T-cell (primary cell): ENCODE measurements at regions of chr6 and their contacts with region 1.

Region 1: GRCh38 chr6:53568776-53569616 is 24.1 kb upstream of the GCLC start:
- DNase-seq: no peak
- ATAC-seq: no peak
- H3K4me3 ChIP-seq: no peak overlapping the region
- H3K4me3 Mint-ChIP-seq: no peak overlapping the region
- H3K27ac ChIP-seq: no peak overlapping the region
- H3K27ac Mint-ChIP-seq: no peak overlapping the region
- H3K4me1 ChIP-seq: no peaks in the 10 kb centered on the region
- H3K4me1 Mint-ChIP-seq: no peaks in the 10 kb centered on the region
- H3K27me3 ChIP-seq: no peaks in the 10 kb centered on the region
- H3K27me3 Mint-ChIP-seq: peaks cover 4 to 22% of the 10 kb centered on the region in 2 donors

Region 2: GRCh38 chr6:52371656-52372191 is 1197.3 kb before region 1 on chr6:
- CTCF ChIA-PET with region 1: no interaction called
- POLR2A ChIA-PET with region 1: no interaction called
- DNase-seq: no peak
- ATAC-seq: no peak
- H3K4me3 ChIP-seq: no peak overlapping the region
- H3K4me3 Mint-ChIP-seq: no peak overlapping the region
- H3K27ac ChIP-seq: no peak overlapping the region
- H3K27ac Mint-ChIP-seq: peak overlapping the region; percentile 68 to 79
- H3K4me1 ChIP-seq: peaks cover 10 to 19% of the 10 kb centered on the region in 2 experiments
- H3K4me1 Mint-ChIP-seq: peaks cover 88 to 91% (median 89%) of the 10 kb centered on the region in 3 donors
- H3K27me3 ChIP-seq: no peaks in the 10 kb centered on the region
- H3K27me3 Mint-ChIP-seq: no peaks in the 10 kb centered on the region

Region 3: GRCh38 chr6:53581173-53581773 is 12.3 kb after region 1 on chr6:
- CTCF ChIA-PET with region 1: interaction called in 1 of 2 experiments, 12 read pairs
- POLR2A ChIA-PET with region 1: no interaction called
- DNase-seq: no peak
- ATAC-seq: no peak
- H3K4me3 ChIP-seq: no peak overlapping the region
- H3K4me3 Mint-ChIP-seq: no peak overlapping the region
- H3K27ac ChIP-seq: no peak overlapping the region
- H3K27ac Mint-ChIP-seq: no peak overlapping the region
- H3K4me1 ChIP-seq: no peaks in the 10 kb centered on the region
- H3K4me1 Mint-ChIP-seq: no peaks in the 10 kb centered on the region
- H3K27me3 ChIP-seq: no peaks in the 10 kb centered on the region
- H3K27me3 Mint-ChIP-seq: no peaks in the 10 kb centered on the region

Region 4: DNA sequence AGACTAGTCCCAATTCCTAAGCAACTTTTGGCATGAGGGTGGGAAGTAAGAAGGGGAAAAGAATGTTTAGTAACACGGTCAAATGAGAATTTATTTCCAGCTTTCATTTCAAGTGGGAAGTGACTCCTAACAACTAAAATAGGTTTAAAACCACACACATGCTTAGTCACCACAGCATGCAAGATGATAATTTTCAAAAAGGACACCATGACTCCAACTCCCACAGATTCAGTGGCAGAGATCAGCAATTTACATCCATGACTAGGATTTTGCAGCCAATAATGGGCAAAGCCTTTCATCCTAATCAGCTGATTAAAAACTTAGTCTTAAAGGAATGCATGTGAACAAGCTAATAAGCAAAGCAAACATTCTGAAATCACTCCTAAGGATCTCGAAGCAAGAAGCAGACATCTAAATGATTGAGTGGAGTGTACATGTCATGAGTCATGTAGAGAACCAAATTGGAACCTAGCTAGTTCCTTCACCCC is 24.0 kb after region 1 on chr6:
- CTCF ChIA-PET with region 1: no interaction called
- POLR2A ChIA-PET with region 1: no interaction called
- DNase-seq: no peak
- ATAC-seq: no peak
- H3K4me3 ChIP-seq: no peak overlapping the region
- H3K4me3 Mint-ChIP-seq: no peak overlapping the region
- H3K27ac ChIP-seq: no peak overlapping the region
- H3K27ac Mint-ChIP-seq: no peak overlapping the region
- H3K4me1 ChIP-seq: no peaks in the 10 kb centered on the region
- H3K4me1 Mint-ChIP-seq: no peaks in the 10 kb centered on the region
- H3K27me3 ChIP-seq: no peaks in the 10 kb centered on the region
- H3K27me3 Mint-ChIP-seq: peaks cover 5 to 22% of the 10 kb centered on the region in 2 donors

Region 5: DNA sequence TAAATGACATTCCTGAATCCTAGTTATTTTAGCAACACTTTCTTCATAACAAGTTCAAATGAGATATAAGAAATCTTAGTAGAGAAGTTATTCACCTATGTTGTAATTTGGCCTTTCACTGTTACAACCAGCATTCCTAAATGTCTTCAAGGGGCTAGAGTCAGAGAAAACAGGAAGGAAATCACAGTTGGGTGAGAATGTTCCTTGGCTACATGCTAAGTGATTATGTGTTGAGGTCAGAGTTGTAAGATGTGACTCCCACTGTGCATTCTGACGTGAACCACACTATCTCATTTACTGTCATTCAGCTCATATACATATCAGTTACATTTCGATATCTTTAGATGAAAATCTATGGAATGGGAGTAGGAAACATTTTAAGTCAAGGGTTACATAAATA is 491.3 kb after region 1 on chr6:
- CTCF ChIA-PET with region 1: no interaction called
- POLR2A ChIA-PET with region 1: no interaction called
- DNase-seq: no peak
- ATAC-seq: no peak
- H3K4me3 ChIP-seq: no peak overlapping the region
- H3K4me3 Mint-ChIP-seq: no peak overlapping the region
- H3K27ac ChIP-seq: no peak overlapping the region
- H3K27ac Mint-ChIP-seq: no peak overlapping the region
- H3K4me1 ChIP-seq: no peaks in the 10 kb centered on the region
- H3K4me1 Mint-ChIP-seq: no peaks in the 10 kb centered on the region
- H3K27me3 ChIP-seq: no peaks in the 10 kb centered on the region
- H3K27me3 Mint-ChIP-seq: peaks cover 0 to 3% of the 10 kb centered on the region in 2 donors